ENCODE measurements at regions of chr5 and their contacts with region 1.

Region 1: DNA sequence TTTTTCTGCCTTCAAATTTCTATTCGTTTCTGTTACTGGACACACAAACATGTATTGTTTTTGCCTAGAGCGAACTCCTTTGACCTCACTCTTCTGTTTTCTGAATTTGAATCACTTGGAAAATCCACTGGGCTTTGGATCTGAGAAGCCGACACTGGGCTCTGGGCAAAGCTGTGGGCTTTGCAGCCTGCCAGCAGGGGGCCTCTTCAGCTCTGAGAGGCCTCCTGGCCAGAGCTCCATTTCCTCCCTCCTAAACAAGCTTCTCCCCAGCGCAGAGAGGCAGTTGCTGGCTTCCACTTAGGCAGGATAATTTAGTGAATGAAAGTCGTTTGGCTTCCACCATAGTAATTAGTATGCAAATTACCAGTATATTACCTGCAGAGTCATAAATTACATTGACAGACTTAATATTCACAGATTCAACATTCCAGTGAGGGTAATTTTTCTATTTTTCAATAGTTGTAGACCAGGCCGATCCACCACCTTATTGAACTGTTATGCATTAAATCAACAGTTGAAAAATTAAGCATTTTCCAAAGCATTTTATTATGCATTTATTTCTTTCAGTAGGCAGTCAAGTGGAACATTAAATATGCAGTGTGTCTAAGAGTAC is 104.0 kb upstream of the ZNF366 start:
- DNase-seq: no peak
- ATAC-seq: peak; percentile 99
- H3K4me3 ChIP-seq: no peak overlapping the region
- H3K27ac ChIP-seq: no peak overlapping the region
- H3K4me1 ChIP-seq: no peaks in the 10 kb centered on the region
- H3K27me3 ChIP-seq: no peaks in the 10 kb centered on the region
- CTCF ChIP-seq: peak; percentile 85 to 97 (median 94)
- EP300 ChIP-seq: no peak
- POLR2A ChIP-seq: no peak
- RAD21 ChIP-seq: peak; percentile 74

Region 2: GRCh38 chr5:72355706-72356299 is 255.4 kb before region 1 on chr5:
- CTCF ChIA-PET with region 1: no interaction called
- POLR2A ChIA-PET with region 1: no interaction called
- RAD21 ChIA-PET with region 1: no interaction called
- SMC1A ChIA-PET with region 1: no interaction called
- in situ Hi-C with region 1: no loop called
- intact Hi-C with region 1: no loop called
- DNase-seq: no peak
- ATAC-seq: no peak
- H3K4me3 ChIP-seq: no peak overlapping the region
- H3K27ac ChIP-seq: no peak overlapping the region
- H3K4me1 ChIP-seq: no peaks in the 10 kb centered on the region
- H3K27me3 ChIP-seq: no peaks in the 10 kb centered on the region
- CTCF ChIP-seq: peak; percentile 9 to 33 (median 28); a peak in 3 of 6 replicates
- EP300 ChIP-seq: no peak
- POLR2A ChIP-seq: no peak
- RAD21 ChIP-seq: no peak

Region 3: DNA sequence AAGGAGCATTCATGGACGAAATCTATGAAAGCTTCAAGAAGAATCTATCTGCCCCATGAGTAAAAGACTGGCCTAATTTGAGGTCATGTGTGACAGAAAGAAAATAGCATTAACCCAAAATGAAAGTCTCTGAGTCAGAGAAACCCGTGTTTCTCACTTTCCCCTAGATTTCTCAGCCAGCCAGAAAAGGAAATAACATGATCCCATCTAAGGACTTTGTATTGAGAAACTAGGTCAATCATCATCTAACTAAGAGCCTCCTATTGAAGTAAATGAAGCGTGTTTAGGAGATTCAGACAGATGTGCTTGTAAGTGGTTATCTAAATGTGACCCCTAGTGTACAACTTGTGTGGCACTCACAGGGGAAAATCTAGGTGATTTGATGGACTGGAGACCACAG is 26.8 kb before region 1 on chr5:
- CTCF ChIA-PET with region 1: interaction called, 18 read pairs
- POLR2A ChIA-PET with region 1: no interaction called
- RAD21 ChIA-PET with region 1: interaction called, 3 read pairs
- SMC1A ChIA-PET with region 1: no interaction called
- in situ Hi-C with region 1: no loop called
- intact Hi-C with region 1: no loop called
- DNase-seq: peak; percentile 36
- ATAC-seq: peak; percentile 76
- H3K4me3 ChIP-seq: no peak overlapping the region
- H3K27ac ChIP-seq: no peak overlapping the region
- H3K4me1 ChIP-seq: peaks cover 10% of the 10 kb centered on the region
- H3K27me3 ChIP-seq: no peaks in the 10 kb centered on the region
- CTCF ChIP-seq: 0 out of 6 replicates have a peak, but pooled peaks of 1 of the 3 experiments have one; percentile 10
- EP300 ChIP-seq: no peak
- POLR2A ChIP-seq: no peak
- RAD21 ChIP-seq: peak; percentile 37; the same call in 1 of the 2 replicates

Region 4: DNA sequence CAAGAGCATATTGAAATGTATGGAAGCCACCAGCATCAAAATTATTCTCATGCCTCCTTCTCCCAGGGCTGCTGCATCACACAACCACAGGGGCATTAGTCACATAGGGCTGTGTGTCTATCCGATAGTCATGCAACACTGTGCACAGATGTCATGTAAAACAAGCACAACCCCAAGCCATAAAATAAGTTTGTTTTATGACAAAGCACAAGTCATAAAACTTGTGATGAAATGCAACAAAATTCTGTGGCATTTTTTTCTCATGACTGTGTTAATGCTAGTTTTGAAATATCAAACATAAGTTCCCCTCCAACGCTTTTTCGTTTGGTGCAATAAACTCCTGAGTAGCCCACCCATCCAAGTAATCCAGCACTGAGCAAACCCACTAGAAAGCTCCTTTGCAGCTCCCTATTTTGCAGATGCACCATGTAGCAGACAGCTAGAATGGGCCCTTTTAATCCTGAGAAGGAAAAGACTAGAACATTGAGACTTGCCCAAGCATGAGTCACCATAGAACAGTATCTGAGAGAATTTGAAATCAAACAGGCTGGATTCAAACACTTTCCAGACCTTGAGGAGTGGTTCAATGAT is 10.7 kb before region 1 on chr5:
- CTCF ChIA-PET with region 1: interaction called, 14 read pairs
- POLR2A ChIA-PET with region 1: no interaction called
- RAD21 ChIA-PET with region 1: no interaction called
- SMC1A ChIA-PET with region 1: interaction called, 3 read pairs
- in situ Hi-C with region 1: no loop called
- intact Hi-C with region 1: no loop called
- DNase-seq: no peak
- ATAC-seq: no peak
- H3K4me3 ChIP-seq: no peak overlapping the region
- H3K27ac ChIP-seq: no peak overlapping the region
- H3K4me1 ChIP-seq: peaks cover 4% of the 10 kb centered on the region; the same call in 1 of the 2 replicates
- H3K27me3 ChIP-seq: no peaks in the 10 kb centered on the region
- CTCF ChIP-seq: no peak
- EP300 ChIP-seq: no peak
- POLR2A ChIP-seq: no peak
- RAD21 ChIP-seq: no peak

Region 5: DNA sequence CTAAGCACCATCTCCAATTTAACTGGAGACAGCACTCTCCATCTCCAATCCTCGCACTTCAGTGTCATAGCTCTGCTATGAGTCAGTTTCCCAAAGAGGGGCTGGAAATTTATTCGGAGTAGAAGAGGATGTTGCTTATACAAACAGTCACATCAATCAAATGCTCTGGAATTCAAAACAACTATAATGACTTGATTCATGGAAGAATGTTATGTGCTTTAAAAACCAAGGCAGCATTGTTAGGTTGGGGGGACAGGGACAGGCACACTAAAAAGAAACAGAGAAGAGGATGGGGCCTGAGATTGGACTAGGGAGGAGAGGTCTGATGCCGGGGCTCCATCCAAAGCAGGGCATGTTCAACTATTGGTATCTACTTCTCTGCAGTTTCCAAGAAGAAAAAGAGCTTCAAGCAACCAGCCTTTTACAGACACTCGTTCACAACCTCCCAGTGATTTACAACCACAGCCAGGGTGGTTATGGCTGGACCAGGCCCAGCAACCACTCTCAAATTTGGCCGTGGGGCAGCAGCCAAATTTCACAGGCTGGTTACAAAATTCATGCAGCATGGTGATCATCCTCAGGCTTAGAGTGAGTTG is 13.5 kb after region 1 on chr5:
- CTCF ChIA-PET with region 1: interaction called, 32 read pairs
- POLR2A ChIA-PET with region 1: interaction called, 4 read pairs
- RAD21 ChIA-PET with region 1: interaction called, 9 read pairs
- SMC1A ChIA-PET with region 1: interaction called, 6 read pairs
- in situ Hi-C with region 1: no loop called
- intact Hi-C with region 1: no loop called
- DNase-seq: no peak
- ATAC-seq: no peak
- H3K4me3 ChIP-seq: no peak overlapping the region
- H3K27ac ChIP-seq: no peak overlapping the region
- H3K4me1 ChIP-seq: no peaks in the 10 kb centered on the region
- H3K27me3 ChIP-seq: peaks cover 2 to 9% of the 10 kb centered on the region in 2 experiments; a peak in 3 of 4 replicates
- CTCF ChIP-seq: no peak
- EP300 ChIP-seq: no peak
- POLR2A ChIP-seq: no peak
- RAD21 ChIP-seq: no peak

Region 6: GRCh38 chr5:72681781-72682180 is 70.6 kb after region 1 on chr5:
- CTCF ChIA-PET with region 1: no interaction called
- POLR2A ChIA-PET with region 1: no interaction called
- RAD21 ChIA-PET with region 1: no interaction called
- SMC1A ChIA-PET with region 1: no interaction called
- in situ Hi-C with region 1: no loop called
- intact Hi-C with region 1: no loop called
- DNase-seq: no peak
- ATAC-seq: no peak
- H3K4me3 ChIP-seq: no peak overlapping the region
- H3K27ac ChIP-seq: no peak overlapping the region
- H3K4me1 ChIP-seq: no peaks in the 10 kb centered on the region
- H3K27me3 ChIP-seq: peaks cover 0 to 2% of the 10 kb centered on the region in 2 experiments; a peak in 3 of 4 replicates
- CTCF ChIP-seq: no peak
- EP300 ChIP-seq: no peak
- POLR2A ChIP-seq: no peak
- RAD21 ChIP-seq: no peak

Region 7: DNA sequence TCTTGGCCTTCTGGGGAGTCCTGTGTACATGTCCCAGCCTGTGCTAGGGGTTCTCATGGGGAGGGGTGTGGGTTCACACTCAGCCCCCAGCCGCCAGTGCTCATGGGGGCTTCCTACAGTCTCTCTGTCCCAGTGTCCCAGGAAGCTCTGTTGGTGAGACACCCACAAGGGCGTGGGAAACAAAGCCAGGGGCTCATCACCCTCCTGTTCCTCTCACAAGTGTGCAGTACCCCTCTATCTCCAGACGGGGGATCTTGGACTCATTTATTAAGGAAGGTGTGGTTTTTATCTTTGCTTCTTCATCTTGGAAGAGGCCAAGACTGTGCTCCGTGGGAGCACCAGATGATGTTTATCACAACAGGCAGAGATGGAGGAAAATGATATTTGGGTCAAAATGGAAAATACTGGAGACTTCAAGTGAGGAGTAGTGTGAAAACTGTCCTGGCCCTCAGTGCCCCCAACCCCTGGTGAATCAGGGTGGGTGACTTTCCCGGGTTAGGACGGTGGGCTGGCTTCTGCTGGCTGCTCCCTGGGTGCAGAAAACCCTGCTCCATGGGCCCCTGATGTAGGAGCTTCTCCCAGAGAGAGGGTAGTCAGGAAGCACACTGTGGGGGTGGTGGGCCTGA is 524.3 kb after region 1 on chr5:
- CTCF ChIA-PET with region 1: no interaction called
- POLR2A ChIA-PET with region 1: no interaction called
- RAD21 ChIA-PET with region 1: no interaction called
- SMC1A ChIA-PET with region 1: no interaction called
- in situ Hi-C with region 1: no loop called
- intact Hi-C with region 1: no loop called
- DNase-seq: no peak
- ATAC-seq: peak; percentile 76
- H3K4me3 ChIP-seq: no peak overlapping the region
- H3K27ac ChIP-seq: no peak overlapping the region
- H3K4me1 ChIP-seq: no peaks in the 10 kb centered on the region
- H3K27me3 ChIP-seq: 0 out of 4 replicates have a peak, but pooled peaks cover 0 to 2% of the 10 kb centered on the region in 2 experiments
- CTCF ChIP-seq: peak; percentile 19 to 42 (median 37); a peak in 4 of 6 replicates
- EP300 ChIP-seq: no peak
- POLR2A ChIP-seq: no peak
- RAD21 ChIP-seq: peak; percentile 37

Region 8: DNA sequence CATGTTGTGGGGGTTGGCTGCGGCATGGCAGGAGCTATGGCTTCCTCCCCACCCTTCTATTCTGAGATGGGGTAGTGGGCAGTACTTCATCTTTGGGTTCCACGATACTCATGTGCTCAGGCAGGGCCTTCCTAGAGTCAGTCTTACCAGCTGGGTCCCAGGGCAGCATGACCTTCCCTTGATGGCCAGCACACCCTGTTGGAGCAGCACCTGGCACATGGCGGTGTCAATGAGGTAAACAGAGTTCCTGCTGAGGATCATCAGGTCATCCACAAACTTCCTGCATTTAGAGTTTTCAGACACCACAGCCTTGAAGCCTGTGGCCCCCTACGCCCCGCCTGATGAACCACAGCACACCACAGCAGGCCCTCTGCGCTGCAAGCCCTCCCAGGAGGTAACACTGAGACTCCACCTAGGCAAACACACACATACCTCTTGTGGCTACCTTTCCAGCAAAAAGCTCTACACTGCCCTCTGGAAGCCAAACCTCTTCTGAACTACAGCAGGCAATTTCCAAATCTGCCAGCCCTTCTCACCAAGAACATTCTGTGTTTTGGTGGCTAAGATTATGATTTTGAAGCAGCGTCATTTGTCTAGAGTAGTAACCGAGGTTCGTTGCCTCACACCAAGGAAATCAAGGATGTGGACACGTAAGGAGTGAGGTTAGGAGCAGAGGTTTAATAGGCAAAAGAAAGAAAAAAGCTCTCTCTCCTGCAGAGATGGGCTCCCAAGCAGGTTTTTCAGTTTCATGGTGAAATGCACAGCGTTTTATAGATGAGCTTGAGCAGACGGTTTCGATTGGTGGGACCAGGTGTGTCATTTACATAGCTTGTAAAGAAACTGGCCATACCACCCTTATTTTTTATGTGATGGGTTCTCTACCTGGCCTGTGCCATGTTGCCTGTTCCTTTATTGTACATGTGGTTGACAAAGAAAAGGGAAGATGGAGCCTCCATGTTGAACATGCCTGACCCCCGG is 541.5 kb after region 1 on chr5:
- CTCF ChIA-PET with region 1: no interaction called
- POLR2A ChIA-PET with region 1: no interaction called
- RAD21 ChIA-PET with region 1: no interaction called
- SMC1A ChIA-PET with region 1: no interaction called
- in situ Hi-C with region 1: no loop called
- intact Hi-C with region 1: no loop called
- DNase-seq: no peak
- ATAC-seq: no peak
- H3K4me3 ChIP-seq: no peak overlapping the region
- H3K27ac ChIP-seq: no peak overlapping the region
- H3K4me1 ChIP-seq: no peaks in the 10 kb centered on the region
- H3K27me3 ChIP-seq: peaks cover 2 to 3% of the 10 kb centered on the region in 2 experiments; a peak in 2 of 4 replicates
- CTCF ChIP-seq: no peak
- EP300 ChIP-seq: no peak
- POLR2A ChIP-seq: no peak
- RAD21 ChIP-seq: no peak

Region 9: DNA sequence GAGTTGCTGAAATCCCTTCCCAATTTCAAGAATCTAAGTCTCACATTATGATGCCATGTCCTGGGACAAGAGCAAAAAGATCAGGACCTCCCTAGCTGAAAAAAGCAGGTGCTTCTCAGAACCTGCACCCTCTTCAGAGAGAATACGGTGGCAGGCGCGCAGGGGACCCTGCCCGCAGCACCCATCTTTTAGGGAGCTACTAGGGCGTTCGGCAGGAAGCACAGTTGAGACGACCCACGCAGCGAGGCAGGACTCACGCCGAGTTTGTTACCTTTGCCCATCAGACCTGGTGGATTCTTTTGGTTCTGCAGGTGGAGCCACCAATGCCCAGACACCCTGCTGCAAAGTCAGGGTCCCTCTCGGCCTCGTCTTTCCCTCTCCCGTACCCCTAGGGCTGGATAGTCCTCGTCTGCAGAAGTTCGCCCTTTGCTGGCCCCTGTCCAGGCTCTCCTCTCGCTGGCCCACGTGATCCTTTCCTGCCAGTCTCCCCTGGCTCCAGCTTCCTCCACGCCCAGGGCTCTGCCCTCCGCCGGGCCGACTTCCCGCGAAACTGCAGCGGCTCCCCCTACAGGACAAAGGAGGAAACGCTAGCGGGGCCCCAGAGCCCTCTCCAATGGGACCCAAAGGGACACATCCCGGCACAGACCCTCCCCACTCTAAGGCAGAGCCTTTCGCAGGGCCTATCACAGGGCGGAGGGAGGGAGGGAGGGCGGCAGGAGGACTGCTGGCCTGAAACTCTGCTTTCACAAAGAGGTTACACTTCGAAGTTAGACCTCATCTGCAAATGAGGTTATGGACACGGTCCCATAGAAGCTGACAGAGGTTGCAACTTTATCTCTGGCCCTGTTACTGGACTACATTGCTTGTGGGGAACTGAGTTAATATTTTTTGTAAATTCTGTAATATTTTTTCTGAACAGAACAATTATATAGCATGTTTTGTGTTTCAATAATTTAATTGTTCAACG is 590.6 kb after region 1 on chr5:
- CTCF ChIA-PET with region 1: interaction called, 13 read pairs
- POLR2A ChIA-PET with region 1: no interaction called
- RAD21 ChIA-PET with region 1: interaction called, 3 read pairs
- SMC1A ChIA-PET with region 1: no interaction called
- in situ Hi-C with region 1: no loop called
- intact Hi-C with region 1: no loop called
- DNase-seq: no peak
- ATAC-seq: peak; percentile 99
- H3K4me3 ChIP-seq: no peak overlapping the region
- H3K27ac ChIP-seq: no peak overlapping the region
- H3K4me1 ChIP-seq: no peaks in the 10 kb centered on the region
- H3K27me3 ChIP-seq: peaks cover 0 to 1% of the 10 kb centered on the region in 2 experiments; a peak in 2 of 4 replicates
- CTCF ChIP-seq: peak; percentile 69 to 90 (median 80)
- EP300 ChIP-seq: no peak
- POLR2A ChIP-seq: no peak
- RAD21 ChIP-seq: peak; percentile 61

Measured in GM12878 (cell line).